PC-9 (cell line): ENCODE measurements at regions of chr5 and their contacts with region 1.

Region 1: DNA sequence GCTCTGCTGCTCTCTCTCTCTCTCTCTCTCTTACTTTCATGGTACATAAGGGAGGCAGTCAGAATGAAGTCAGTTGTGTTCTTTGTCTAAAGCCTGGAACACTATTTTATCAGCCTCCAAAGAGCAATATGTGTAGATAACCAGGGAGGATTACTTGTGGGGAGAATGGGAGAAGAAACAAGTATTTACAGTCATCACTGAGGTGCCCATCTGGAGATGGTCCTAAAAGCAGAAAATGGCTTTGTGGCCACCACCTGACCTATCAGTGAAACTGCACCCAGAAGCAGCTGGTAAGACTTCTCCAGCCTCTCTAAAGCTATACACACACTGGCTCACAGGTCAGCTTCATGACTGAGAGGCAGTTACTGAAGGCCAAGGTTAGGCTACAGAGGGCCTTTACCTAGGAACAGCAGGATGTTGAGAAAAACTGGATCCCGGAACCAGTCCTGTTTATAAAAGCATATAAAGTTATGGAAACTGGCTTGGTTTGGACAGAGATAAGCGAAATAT is 75.1 kb downstream of the MRPS27 start:
- DNase-seq: no peak
- H3K4me3 ChIP-seq: no peak overlapping the region
- H3K27ac ChIP-seq: no peak overlapping the region
- H3K4me1 ChIP-seq: peaks cover 27% of the 10 kb centered on the region
- H3K27me3 ChIP-seq: no peaks in the 10 kb centered on the region
- CTCF ChIP-seq: peak; percentile 50

Region 2: DNA sequence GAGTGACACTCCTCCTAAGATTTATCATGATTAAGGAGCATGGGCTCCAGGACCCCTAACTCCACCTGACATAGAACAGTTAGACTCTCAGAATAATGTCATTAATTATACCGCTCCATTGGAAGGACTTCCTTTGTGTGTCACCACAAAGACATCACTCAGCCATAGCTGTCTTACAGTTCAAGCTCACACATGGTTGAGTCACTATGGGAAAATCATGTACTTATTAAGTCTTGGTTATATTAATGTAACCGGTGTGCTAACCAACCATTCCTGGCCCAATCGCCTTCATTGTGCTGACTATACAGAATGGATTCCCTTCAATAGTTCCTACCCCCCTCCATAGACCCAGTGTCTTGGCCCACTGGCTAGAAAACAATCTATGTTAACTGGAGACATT is 668.7 kb before region 1 on chr5:
- CTCF ChIA-PET with region 1: no interaction called
- POLR2A ChIA-PET with region 1: no interaction called
- intact Hi-C with region 1: no loop called
- DNase-seq: no peak
- H3K4me3 ChIP-seq: no peak overlapping the region
- H3K27ac ChIP-seq: no peak overlapping the region
- H3K4me1 ChIP-seq: peaks cover 14% of the 10 kb centered on the region
- H3K27me3 ChIP-seq: no peaks in the 10 kb centered on the region
- CTCF ChIP-seq: no peak

Region 3: GRCh38 chr5:71830681-71831539 is 414.0 kb before region 1 on chr5:
- CTCF ChIA-PET with region 1: no interaction called
- POLR2A ChIA-PET with region 1: interaction called, 14 read pairs
- intact Hi-C with region 1: no loop called
- DNase-seq: peak; percentile 41 to 43
- H3K4me3 ChIP-seq: no peak overlapping the region
- H3K27ac ChIP-seq: no peak overlapping the region
- H3K4me1 ChIP-seq: no peaks in the 10 kb centered on the region
- H3K27me3 ChIP-seq: no peaks in the 10 kb centered on the region
- CTCF ChIP-seq: no peak

Region 4: GRCh38 chr5:72138943-72139521 is 105.9 kb before region 1 on chr5:
- CTCF ChIA-PET with region 1: no interaction called
- POLR2A ChIA-PET with region 1: no interaction called
- intact Hi-C with region 1: loop called (anchors 2 kb)
- DNase-seq: no peak
- H3K4me3 ChIP-seq: no peak overlapping the region
- H3K27ac ChIP-seq: no peak overlapping the region
- H3K4me1 ChIP-seq: peaks cover 27% of the 10 kb centered on the region
- H3K27me3 ChIP-seq: no peaks in the 10 kb centered on the region
- CTCF ChIP-seq: no peak

Region 5: GRCh38 chr5:72161951-72162350 is 83.0 kb before region 1 on chr5:
- CTCF ChIA-PET with region 1: no interaction called
- POLR2A ChIA-PET with region 1: interaction called, 12 read pairs
- intact Hi-C with region 1: no loop called
- DNase-seq: no peak
- H3K4me3 ChIP-seq: no peak overlapping the region
- H3K27ac ChIP-seq: no peak overlapping the region
- H3K4me1 ChIP-seq: no peaks in the 10 kb centered on the region
- H3K27me3 ChIP-seq: no peaks in the 10 kb centered on the region
- CTCF ChIP-seq: no peak

Region 6: GRCh38 chr5:72179028-72179815 is 65.7 kb before region 1 on chr5:
- CTCF ChIA-PET with region 1: interaction called, 15 read pairs
- POLR2A ChIA-PET with region 1: no interaction called
- intact Hi-C with region 1: no loop called
- DNase-seq: peak; percentile 66 to 90
- H3K4me3 ChIP-seq: no peak overlapping the region
- H3K27ac ChIP-seq: peak overlapping the region; percentile 62
- H3K4me1 ChIP-seq: peaks cover 5% of the 10 kb centered on the region; the same call in 1 of the 2 replicates
- H3K27me3 ChIP-seq: no peaks in the 10 kb centered on the region
- CTCF ChIP-seq: no peak

Region 7: GRCh38 chr5:72210888-72211678 is 33.8 kb before region 1 on chr5:
- CTCF ChIA-PET with region 1: no interaction called
- POLR2A ChIA-PET with region 1: no interaction called
- intact Hi-C with region 1: loop called (anchors 5 kb)
- DNase-seq: peak; percentile 50 to 87
- H3K4me3 ChIP-seq: peak overlapping the region; percentile 2; the same call in 1 of the 2 replicates
- H3K27ac ChIP-seq: peak overlapping the region; percentile 83
- H3K4me1 ChIP-seq: peaks cover 37% of the 10 kb centered on the region
- H3K27me3 ChIP-seq: no peaks in the 10 kb centered on the region
- CTCF ChIP-seq: no peak

Region 8: GRCh38 chr5:72222521-72222920 is 22.4 kb before region 1 on chr5:
- CTCF ChIA-PET with region 1: no interaction called
- POLR2A ChIA-PET with region 1: no interaction called
- intact Hi-C with region 1: no loop called
- DNase-seq: no peak
- H3K4me3 ChIP-seq: no peak overlapping the region
- H3K27ac ChIP-seq: no peak overlapping the region
- H3K4me1 ChIP-seq: no peaks in the 10 kb centered on the region
- H3K27me3 ChIP-seq: no peaks in the 10 kb centered on the region
- CTCF ChIP-seq: no peak

Region 9: DNA sequence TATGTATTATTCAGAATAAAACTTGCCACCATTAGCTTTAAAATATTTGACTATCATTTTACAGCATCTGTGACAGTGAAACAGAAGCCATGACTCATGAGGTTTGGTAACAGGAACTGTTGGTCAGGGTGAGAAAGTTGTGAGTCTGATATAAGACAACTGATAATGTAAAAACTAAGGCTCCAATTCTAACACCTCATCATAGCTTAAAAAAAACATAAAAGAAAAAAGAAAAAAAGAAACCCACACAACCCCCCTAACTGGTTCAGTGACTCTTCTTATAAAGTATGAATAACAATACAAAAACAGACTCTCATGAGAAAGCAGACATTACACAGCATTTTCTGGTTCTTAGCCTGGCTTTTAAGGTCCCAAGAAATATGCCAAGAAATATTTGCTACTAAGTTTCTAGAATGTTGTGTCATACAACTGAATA is 10.6 kb before region 1 on chr5:
- CTCF ChIA-PET with region 1: no interaction called
- POLR2A ChIA-PET with region 1: interaction called, 13 read pairs
- intact Hi-C with region 1: loop called (anchors 2 kb)
- DNase-seq: peak; percentile 25 to 95
- H3K4me3 ChIP-seq: peak overlapping the region; percentile 25; the same call in 1 of the 2 replicates
- H3K27ac ChIP-seq: peak overlapping the region; percentile 99
- H3K4me1 ChIP-seq: peaks cover 52% of the 10 kb centered on the region
- H3K27me3 ChIP-seq: no peaks in the 10 kb centered on the region
- CTCF ChIP-seq: no peak

Region 10: GRCh38 chr5:72788866-72789505 is 544.1 kb after region 1 on chr5:
- CTCF ChIA-PET with region 1: no interaction called
- POLR2A ChIA-PET with region 1: no interaction called
- intact Hi-C with region 1: no loop called
- DNase-seq: peak in 1 of 2 experiments; percentile 53
- H3K4me3 ChIP-seq: no peak overlapping the region
- H3K27ac ChIP-seq: no peak overlapping the region
- H3K4me1 ChIP-seq: peaks cover 10% of the 10 kb centered on the region
- H3K27me3 ChIP-seq: no peaks in the 10 kb centered on the region
- CTCF ChIP-seq: no peak

Region 11: GRCh38 chr5:73027361-73027760 is 782.4 kb after region 1 on chr5:
- CTCF ChIA-PET with region 1: no interaction called
- POLR2A ChIA-PET with region 1: no interaction called
- intact Hi-C with region 1: no loop called
- DNase-seq: no peak
- H3K4me3 ChIP-seq: no peak overlapping the region
- H3K27ac ChIP-seq: no peak overlapping the region
- H3K4me1 ChIP-seq: peaks cover 32% of the 10 kb centered on the region
- H3K27me3 ChIP-seq: no peaks in the 10 kb centered on the region
- CTCF ChIP-seq: peak; percentile 59